Caco-2 (cell line): ENCODE measurements at regions of chr7 and their contacts with region 1.

Region 1: GRCh38 chr7:106947244-106947728 is 82.2 kb downstream of the PIK3CG start:
- DNase-seq: peak; percentile 50 to 62
- H3K4me3 ChIP-seq: no peak overlapping the region
- H3K4me3 Mint-ChIP-seq: no peak overlapping the region
- H3K27ac Mint-ChIP-seq: no peak overlapping the region
- H3K4me1 ChIP-seq: no peaks in the 10 kb centered on the region
- H3K4me1 Mint-ChIP-seq: no peaks in the 10 kb centered on the region
- H3K27me3 ChIP-seq: no peaks in the 10 kb centered on the region
- H3K27me3 Mint-ChIP-seq: peaks cover 23% of the 10 kb centered on the region
- CTCF ChIP-seq: peak; percentile 61 to 65

Region 2: GRCh38 chr7:106793015-106793975 is 154.0 kb before region 1 on chr7:
- CTCF ChIA-PET with region 1: interaction called, 9 read pairs
- POLR2A ChIA-PET with region 1: no interaction called
- intact Hi-C with region 1: loop called (anchors 1 kb)
- DNase-seq: peak in 1 of 2 experiments; percentile 43
- H3K4me3 ChIP-seq: no peak overlapping the region
- H3K4me3 Mint-ChIP-seq: no peak overlapping the region
- H3K27ac Mint-ChIP-seq: no peak overlapping the region
- H3K4me1 ChIP-seq: no peaks in the 10 kb centered on the region
- H3K4me1 Mint-ChIP-seq: no peaks in the 10 kb centered on the region
- H3K27me3 ChIP-seq: no peaks in the 10 kb centered on the region; the same call in 1 of the 2 replicates
- H3K27me3 Mint-ChIP-seq: peaks cover 12% of the 10 kb centered on the region
- CTCF ChIP-seq: peak; percentile 68 to 75

Region 3: DNA sequence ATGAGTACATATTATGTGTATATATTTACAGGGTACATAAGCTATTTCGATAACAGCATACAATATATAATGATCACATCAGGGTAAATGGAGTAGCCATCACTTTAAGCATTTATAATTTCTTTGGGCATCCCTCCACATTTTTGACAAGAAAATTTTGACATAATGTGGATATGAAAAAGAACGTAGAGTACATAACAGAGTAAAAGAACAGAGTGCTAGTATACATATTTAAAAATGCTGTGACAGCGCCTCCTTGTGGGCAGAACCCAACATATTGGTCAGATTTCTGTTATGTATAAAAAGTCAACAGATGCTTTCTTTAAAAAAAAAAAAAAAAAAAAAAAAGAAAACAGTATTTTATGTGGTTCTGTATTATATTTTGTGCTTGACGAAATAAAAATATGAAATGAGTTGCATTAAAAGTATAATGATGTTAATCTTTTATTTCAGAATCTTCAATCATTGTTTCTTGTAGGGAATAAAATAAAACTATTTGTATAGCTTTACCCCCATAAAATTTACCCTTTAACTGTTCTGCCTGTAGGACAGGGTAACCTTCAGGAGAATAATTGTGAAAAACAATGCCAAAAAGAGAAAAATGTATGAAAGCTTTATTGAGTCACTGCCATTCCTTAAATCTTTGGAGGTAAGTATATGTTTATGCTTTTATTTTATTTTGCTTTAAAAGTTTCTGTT is 203.2 kb after region 1 on chr7:
- CTCF ChIA-PET with region 1: interaction called, 6 read pairs
- POLR2A ChIA-PET with region 1: no interaction called
- intact Hi-C with region 1: loop called (anchors 1 kb)
- DNase-seq: peak; percentile 53 to 63
- H3K4me3 ChIP-seq: no peak overlapping the region
- H3K4me3 Mint-ChIP-seq: no peak overlapping the region
- H3K27ac Mint-ChIP-seq: no peak overlapping the region
- H3K4me1 ChIP-seq: no peaks in the 10 kb centered on the region
- H3K4me1 Mint-ChIP-seq: peaks cover 7% of the 10 kb centered on the region
- H3K27me3 ChIP-seq: no peaks in the 10 kb centered on the region
- H3K27me3 Mint-ChIP-seq: no peaks in the 10 kb centered on the region
- CTCF ChIP-seq: peak; percentile 62 to 81